Esophagus muscularis mucosa (tissue), 4 donors: ENCODE measurements at regions of chr3 and their contacts with region 1.

Region 1: DNA sequence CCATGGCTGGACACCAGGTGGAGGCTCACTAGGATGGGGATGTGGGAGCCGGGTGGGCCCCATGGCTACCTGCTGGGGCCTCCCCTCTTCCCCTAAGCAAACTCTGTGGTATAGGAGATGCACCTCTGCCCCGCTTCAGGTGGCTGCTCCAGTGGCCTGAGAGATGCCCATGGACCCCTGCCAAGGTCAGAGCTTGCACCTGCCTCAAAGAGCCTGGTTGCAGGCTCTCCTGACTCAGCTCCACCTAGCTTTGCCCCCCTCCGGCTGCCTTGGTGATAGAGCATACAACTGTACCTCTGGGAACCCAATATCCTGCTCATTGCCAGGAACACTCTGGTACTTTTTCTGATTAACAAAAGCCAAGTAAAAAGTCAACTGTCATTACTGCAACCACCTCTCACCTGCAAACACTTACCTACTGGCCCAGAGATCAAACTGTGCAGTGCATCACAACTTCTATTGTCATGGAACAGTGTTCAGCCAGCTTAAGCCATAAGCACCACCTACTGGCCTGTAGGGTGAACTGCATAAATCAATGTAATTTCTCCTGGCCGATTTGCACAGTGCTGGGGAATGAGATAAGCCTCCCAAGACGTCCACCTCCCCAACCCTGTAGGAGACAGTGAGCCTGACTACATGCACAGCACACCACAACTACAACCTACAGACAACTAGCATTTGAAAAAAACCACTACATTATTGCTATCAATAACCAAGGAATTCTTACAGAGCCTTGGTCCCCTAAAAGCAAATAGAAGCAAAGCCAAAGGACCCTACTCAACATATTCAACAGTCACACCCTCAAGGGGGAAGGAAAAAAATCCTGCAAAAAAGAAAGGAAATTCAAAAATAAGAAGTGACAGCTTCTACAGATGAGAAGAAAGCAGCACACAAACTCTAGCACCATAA is 352.4 kb upstream of the ARHGEF26 start:
- DNase-seq: no peak
- H3K4me3 ChIP-seq: no peak overlapping the region
- H3K27ac ChIP-seq: no peak overlapping the region
- H3K4me1 ChIP-seq: peaks cover 0 to 9% (median 5%) of the 10 kb centered on the region in 4 donors
- H3K27me3 ChIP-seq: no peaks in the 10 kb centered on the region
- CTCF ChIP-seq: peak; percentile 73 to 92 (median 76)
- EP300 ChIP-seq: no peak
- POLR2A ChIP-seq: no peak

Region 2: DNA sequence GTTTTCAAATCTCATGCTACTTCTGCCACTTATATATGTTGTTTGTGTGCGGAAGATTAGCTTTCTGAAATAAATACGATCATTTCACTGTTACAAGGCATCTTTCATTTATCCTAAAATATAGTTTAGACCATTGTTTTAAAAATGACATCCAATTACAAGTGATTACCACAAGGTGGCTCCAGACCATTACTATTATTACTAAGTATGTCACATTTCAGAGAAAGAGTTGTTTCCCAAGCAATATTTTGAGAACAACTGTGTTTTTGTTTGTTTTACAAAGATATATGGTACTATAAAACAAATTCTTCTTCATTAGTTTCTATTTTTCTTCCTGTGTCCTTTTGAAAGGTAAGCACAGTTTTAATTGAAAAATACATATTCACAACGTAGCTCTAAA is 742.8 kb before region 1 on chr3:
- intact Hi-C with region 1: loop called (anchors 5 kb)
- DNase-seq: no peak
- H3K4me3 ChIP-seq: no peak overlapping the region
- H3K27ac ChIP-seq: no peak overlapping the region
- H3K4me1 ChIP-seq: peaks cover 0 to 27% (median 25%) of the 10 kb centered on the region in 4 donors
- H3K27me3 ChIP-seq: no peaks in the 10 kb centered on the region
- CTCF ChIP-seq: peak; percentile 65 to 70 (median 69)
- EP300 ChIP-seq: no peak
- POLR2A ChIP-seq: no peak

Region 3: GRCh38 chr3:153043729-153044328 is 725.0 kb before region 1 on chr3:
- intact Hi-C with region 1: loop called (anchors 5 kb)
- DNase-seq: no peak
- H3K4me3 ChIP-seq: peak overlapping the region in 1 of 4 donors; percentile 37
- H3K27ac ChIP-seq: no peak overlapping the region
- H3K4me1 ChIP-seq: peaks cover 0 to 11% (median 8%) of the 10 kb centered on the region in 4 donors
- H3K27me3 ChIP-seq: no peaks in the 10 kb centered on the region
- CTCF ChIP-seq: no peak
- EP300 ChIP-seq: no peak
- POLR2A ChIP-seq: no peak

Region 4: GRCh38 chr3:153161138-153161713 is 607.6 kb before region 1 on chr3:
- intact Hi-C with region 1: loop called (anchors 5 kb)
- DNase-seq: peak; percentile 98
- H3K4me3 ChIP-seq: peak overlapping the region; percentile 70 to 96 (median 89)
- H3K27ac ChIP-seq: peak overlapping the region; percentile 87 to 98 (median 92)
- H3K4me1 ChIP-seq: peaks cover 19 to 37% (median 32%) of the 10 kb centered on the region in 4 donors
- H3K27me3 ChIP-seq: no peaks in the 10 kb centered on the region
- CTCF ChIP-seq: no peak
- EP300 ChIP-seq: no peak
- POLR2A ChIP-seq: peak; percentile 45

Region 5: GRCh38 chr3:153291056-153291685 is 477.6 kb before region 1 on chr3:
- intact Hi-C with region 1: loop called (anchors 10 kb)
- DNase-seq: no peak
- H3K4me3 ChIP-seq: no peak overlapping the region
- H3K27ac ChIP-seq: peak overlapping the region in 1 of 4 donors; percentile 27
- H3K4me1 ChIP-seq: peaks cover 0 to 41% (median 24%) of the 10 kb centered on the region in 4 donors
- H3K27me3 ChIP-seq: no peaks in the 10 kb centered on the region
- CTCF ChIP-seq: peak; percentile 33 to 52 (median 42)
- EP300 ChIP-seq: no peak
- POLR2A ChIP-seq: no peak

Region 6: GRCh38 chr3:153595186-153595815 is 173.5 kb before region 1 on chr3:
- intact Hi-C with region 1: loop called (anchors 10 kb)
- DNase-seq: no peak
- H3K4me3 ChIP-seq: no peak overlapping the region
- H3K27ac ChIP-seq: no peak overlapping the region
- H3K4me1 ChIP-seq: peaks cover 0 to 5% (median 2%) of the 10 kb centered on the region in 4 donors
- H3K27me3 ChIP-seq: no peaks in the 10 kb centered on the region
- CTCF ChIP-seq: peak; percentile 58 to 67 (median 58)
- EP300 ChIP-seq: no peak
- POLR2A ChIP-seq: no peak

Region 7: DNA sequence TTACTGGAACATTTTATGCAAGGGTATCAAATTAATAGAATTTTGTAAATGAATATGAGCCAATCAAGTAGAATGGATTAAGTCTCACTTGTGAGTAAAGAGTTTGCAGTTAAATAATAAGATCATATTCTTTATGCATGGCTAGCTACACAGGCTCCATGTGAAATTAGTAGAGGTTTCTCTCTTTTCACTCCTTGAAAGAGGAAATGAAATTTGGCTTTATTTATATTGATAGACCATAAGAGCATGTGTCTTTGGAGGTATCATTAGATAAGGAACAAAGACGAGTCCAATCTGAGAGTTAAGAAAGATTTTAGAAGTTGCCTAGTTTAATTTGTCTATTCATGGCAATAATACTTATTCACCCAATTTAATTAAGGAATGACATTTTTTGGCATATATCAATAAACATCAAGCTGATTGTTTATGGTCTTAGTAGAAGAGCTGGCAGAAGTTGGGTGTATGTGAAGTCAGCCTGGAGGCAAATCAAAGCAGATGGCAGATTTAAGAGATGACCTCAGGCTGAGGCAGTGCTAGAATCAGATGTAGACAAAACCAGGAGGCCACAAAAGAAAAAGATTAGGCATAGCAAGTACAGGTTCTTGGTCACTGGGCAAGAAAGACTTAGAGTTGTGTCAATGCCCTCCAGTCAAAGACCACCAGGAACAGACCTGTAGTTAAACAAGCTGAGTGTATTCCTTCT is 54.1 kb before region 1 on chr3:
- intact Hi-C with region 1: no loop called
- DNase-seq: no peak
- H3K4me3 ChIP-seq: no peak overlapping the region
- H3K27ac ChIP-seq: no peak overlapping the region
- H3K4me1 ChIP-seq: no peaks in the 10 kb centered on the region
- H3K27me3 ChIP-seq: no peaks in the 10 kb centered on the region
- CTCF ChIP-seq: no peak
- EP300 ChIP-seq: no peak
- POLR2A ChIP-seq: no peak